Activated CD4-positive, alpha-beta T cell treated with anti-CD3 and anti-CD28 coated beads, Interleukin-2, amount 10 ng/mL, durations not matched to agents 24 days and 14 days (primary cell): ENCODE measurements at regions of chr11 and their contacts with region 1.

Region 1: GRCh38 chr11:111429066-111429506 is 50.0 kb upstream of the POU2AF1 start:
- DNase-seq: peak; percentile 89
- H3K4me3 Mint-ChIP-seq: no peak overlapping the region
- H3K27ac Mint-ChIP-seq: no peak overlapping the region
- H3K4me1 Mint-ChIP-seq: peaks cover 4% of the 10 kb centered on the region
- H3K27me3 Mint-ChIP-seq: peaks cover 12% of the 10 kb centered on the region

Region 2: GRCh38 chr11:111446404-111447111 is 17.5 kb after region 1 on chr11:
- intact Hi-C with region 1: loop called (anchors 2 kb)
- DNase-seq: peak; percentile 94
- H3K4me3 Mint-ChIP-seq: no peak overlapping the region
- H3K27ac Mint-ChIP-seq: peak overlapping the region; percentile 4
- H3K4me1 Mint-ChIP-seq: peaks cover 14% of the 10 kb centered on the region
- H3K27me3 Mint-ChIP-seq: peaks cover 2% of the 10 kb centered on the region

Region 3: GRCh38 chr11:111557425-111558111 is 128.5 kb after region 1 on chr11:
- intact Hi-C with region 1: no loop called
- DNase-seq: no peak
- H3K4me3 Mint-ChIP-seq: no peak overlapping the region
- H3K27ac Mint-ChIP-seq: no peak overlapping the region
- H3K4me1 Mint-ChIP-seq: no peaks in the 10 kb centered on the region
- H3K27me3 Mint-ChIP-seq: peaks cover 7% of the 10 kb centered on the region